Left ventricle myocardium inferior (tissue), 1 donor: ENCODE measurements at regions of chr4 and their contacts with region 1.

Region 1: DNA sequence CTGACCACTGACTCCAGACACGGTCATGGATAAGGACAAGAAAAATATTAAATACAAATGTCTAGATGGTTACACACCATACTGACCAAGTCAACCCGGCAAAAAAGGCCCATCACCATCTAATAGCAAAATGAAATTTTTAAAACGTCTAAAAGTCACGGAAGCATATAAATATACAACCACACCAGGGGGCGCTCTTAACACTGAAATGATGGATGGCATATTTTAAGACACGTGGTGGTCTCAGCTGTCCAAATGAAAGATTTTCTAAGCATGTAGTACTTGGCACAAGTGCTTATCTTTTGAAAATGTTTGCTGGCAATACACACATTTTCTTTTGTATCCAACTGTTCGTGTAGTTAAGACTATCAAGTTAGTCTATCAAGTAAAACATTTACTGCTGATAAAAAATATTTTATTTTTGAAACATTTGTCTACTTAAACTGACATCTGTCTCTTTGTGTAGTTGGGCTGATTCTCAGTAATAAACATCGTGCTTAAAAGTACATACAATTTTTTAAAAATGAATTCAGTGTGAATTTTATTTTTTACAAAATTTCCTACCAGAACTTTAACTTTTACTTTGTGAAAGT is 64.6 kb downstream of the COX7B2 start:
- DNase-seq: no peak
- H3K4me3 ChIP-seq: no peak overlapping the region
- H3K27ac ChIP-seq: no peak overlapping the region
- H3K4me1 ChIP-seq: no peaks in the 10 kb centered on the region
- H3K27me3 ChIP-seq: no peaks in the 10 kb centered on the region
- CTCF ChIP-seq: peak; percentile 68

Region 2: GRCh38 chr4:46900082-46900481 is 55.7 kb after region 1 on chr4:
- intact Hi-C with region 1: no loop called
- DNase-seq: no peak
- H3K4me3 ChIP-seq: no peak overlapping the region
- H3K27ac ChIP-seq: no peak overlapping the region
- H3K4me1 ChIP-seq: no peaks in the 10 kb centered on the region
- H3K27me3 ChIP-seq: no peaks in the 10 kb centered on the region
- CTCF ChIP-seq: no peak

Region 3: DNA sequence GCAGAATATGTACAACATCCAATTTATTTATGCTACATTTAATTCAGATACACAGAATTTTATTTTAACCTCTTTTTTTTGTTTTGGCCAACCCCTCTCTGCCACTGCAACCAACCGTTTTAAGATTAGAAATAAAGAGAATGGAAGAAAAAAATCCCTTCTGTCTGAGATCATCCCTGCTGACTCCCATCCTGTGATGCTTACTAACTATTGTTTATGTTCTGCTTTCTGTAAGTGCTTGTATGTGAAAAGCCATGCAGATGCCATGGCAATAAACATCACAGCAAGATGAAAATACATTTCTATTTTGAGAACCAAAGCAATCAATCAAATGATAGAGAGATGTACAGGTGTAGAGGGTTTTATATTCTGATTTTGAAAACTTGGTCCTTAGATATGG is 257.0 kb after region 1 on chr4:
- intact Hi-C with region 1: no loop called
- DNase-seq: no peak
- H3K4me3 ChIP-seq: no peak overlapping the region
- H3K27ac ChIP-seq: no peak overlapping the region
- H3K4me1 ChIP-seq: no peaks in the 10 kb centered on the region
- H3K27me3 ChIP-seq: no peaks in the 10 kb centered on the region
- CTCF ChIP-seq: no peak

Region 4: DNA sequence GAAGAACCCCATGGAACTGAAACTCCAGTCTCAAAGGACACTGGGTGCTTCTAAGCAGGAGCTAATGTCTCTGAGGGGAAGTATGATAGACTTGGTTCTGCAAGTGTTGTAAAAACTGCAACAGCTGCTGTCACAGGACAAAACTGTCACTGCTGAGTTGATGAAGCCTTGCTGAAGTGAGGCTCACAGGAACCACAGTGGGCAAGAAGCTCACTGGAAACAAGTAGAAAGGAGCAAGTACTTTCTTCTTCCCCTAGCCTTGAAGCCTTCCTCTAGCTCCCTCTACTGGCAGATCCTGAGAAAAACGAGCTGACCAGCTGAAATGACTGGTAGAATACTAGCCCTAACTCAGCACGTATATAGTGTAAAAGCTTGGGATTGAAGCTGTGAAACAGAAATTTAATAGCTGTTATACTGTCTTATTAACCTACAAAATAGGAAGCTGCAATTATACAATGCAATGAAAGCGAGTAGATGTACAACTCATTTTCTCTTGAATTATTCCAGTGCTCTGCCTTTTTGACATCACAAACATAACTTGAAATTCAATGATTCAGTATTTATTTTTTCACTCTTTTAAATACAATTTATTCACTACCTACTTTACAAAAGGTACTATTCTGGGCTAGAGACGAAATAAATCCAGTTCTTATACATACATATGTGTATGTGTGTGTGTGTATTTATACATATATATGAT is 278.3 kb after region 1 on chr4:
- intact Hi-C with region 1: loop called (anchors 2 kb)
- DNase-seq: no peak
- H3K4me3 ChIP-seq: no peak overlapping the region
- H3K27ac ChIP-seq: no peak overlapping the region
- H3K4me1 ChIP-seq: no peaks in the 10 kb centered on the region
- H3K27me3 ChIP-seq: no peaks in the 10 kb centered on the region
- CTCF ChIP-seq: peak; percentile 83

Region 5: DNA sequence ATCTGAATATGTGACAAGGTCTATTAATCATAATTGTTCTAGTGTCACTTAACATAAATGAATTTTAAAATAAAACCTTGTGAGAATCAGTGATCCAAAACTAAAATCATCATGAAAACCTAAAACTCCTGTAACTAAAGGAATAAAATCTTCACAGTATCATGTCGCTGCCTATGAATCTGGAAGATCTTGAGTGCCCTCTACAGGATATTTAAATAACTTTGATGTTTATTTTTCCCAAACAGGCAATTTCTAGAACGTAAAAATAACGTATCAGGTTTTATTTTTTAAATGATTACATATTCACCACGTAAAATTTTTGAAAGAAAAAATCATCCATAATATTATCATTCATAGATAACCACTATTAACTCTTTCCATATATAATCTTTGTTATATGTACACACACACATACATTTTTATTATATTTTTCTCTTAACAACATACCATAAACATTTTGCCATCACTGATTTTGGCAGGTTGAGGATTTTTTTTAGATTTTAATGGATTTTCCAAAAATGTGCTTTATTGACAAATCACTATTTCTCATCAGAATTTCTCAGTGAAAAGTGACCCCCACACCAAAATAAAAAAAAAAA is 539.5 kb after region 1 on chr4:
- intact Hi-C with region 1: loop called (anchors 10 kb)
- DNase-seq: no peak
- H3K4me3 ChIP-seq: no peak overlapping the region
- H3K27ac ChIP-seq: no peak overlapping the region
- H3K4me1 ChIP-seq: no peaks in the 10 kb centered on the region
- H3K27me3 ChIP-seq: no peaks in the 10 kb centered on the region
- CTCF ChIP-seq: peak; percentile 60